HCT116 (cell line): ENCODE measurements at regions of chrX and their contacts with region 1.

Region 1: DNA sequence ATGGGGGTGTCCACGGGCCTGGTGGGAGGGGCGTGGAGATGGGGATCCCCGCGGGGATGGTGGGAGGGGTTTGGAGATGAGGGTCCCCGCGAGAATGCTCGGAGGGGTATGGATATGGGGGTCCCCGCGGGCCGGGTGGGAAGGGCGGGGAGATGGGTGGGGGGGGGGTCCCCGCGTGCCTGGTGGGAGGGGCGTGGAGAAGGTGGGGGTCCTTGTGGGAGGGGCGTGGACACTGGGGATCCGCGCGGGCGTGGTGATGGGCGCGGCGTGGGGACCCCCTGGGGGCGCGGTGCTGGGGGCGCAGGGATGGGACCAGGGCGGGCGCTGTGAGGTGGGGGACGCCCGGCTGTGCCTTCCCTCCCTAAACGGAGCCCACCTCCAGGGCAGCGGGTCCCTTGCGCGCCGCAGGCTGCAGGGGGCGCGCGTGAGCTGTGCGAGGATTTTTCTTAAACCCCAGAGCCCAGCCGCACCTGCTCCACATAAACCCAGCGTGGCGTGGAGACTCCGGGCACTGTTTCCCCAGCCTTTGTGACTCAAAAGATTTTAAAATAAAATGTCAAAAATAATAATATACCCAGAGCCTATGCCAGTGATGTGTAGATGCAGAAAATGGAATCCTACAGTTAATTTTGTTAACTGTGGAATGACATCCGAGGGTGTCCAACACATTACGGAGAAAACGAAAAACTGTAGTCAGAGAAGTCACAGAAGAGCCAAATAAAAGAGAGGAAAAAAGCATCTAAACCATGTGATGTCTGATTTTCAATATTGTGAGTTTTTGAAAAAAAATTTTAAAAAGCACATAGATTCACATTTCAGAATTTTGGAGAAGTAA is 1.5 kb upstream of the ASMTL start:
- DNase-seq: peak; percentile 36
- ATAC-seq: peak; percentile 41
- H3K4me3 ChIP-seq: no peak overlapping the region
- H3K27ac ChIP-seq: no peak overlapping the region
- H3K4me1 ChIP-seq: peaks cover 0 to 8% of the 10 kb centered on the region in 2 experiments; a peak in 1 of 4 replicates
- H3K27me3 ChIP-seq: 0 out of 2 replicates have a peak, but pooled peaks cover 2% of the 10 kb centered on the region
- CTCF ChIP-seq: peak in 2 of 3 experiments; percentile 71 to 86; a peak in 4 of 6 replicates
- POLR2A ChIP-seq: no peak
- RAD21 ChIP-seq: no peak

Region 2: GRCh38 chrX:1411291-1411720 is 42.9 kb before region 1 on chrX:
- CTCF ChIA-PET with region 1: no interaction called
- POLR2A ChIA-PET with region 1: no interaction called
- RAD21 ChIA-PET with region 1: no interaction called
- intact Hi-C with region 1: no loop called
- DNase-seq: no peak
- ATAC-seq: no peak
- H3K4me3 ChIP-seq: no peak overlapping the region
- H3K27ac ChIP-seq: no peak overlapping the region
- H3K4me1 ChIP-seq: no peaks in the 10 kb centered on the region
- H3K27me3 ChIP-seq: no peaks in the 10 kb centered on the region
- CTCF ChIP-seq: no peak
- POLR2A ChIP-seq: no peak
- RAD21 ChIP-seq: no peak

Region 3: GRCh38 chrX:1580735-1581531 is 126.8 kb after region 1 on chrX:
- CTCF ChIA-PET with region 1: no interaction called
- POLR2A ChIA-PET with region 1: no interaction called
- RAD21 ChIA-PET with region 1: no interaction called
- intact Hi-C with region 1: loop called (anchors 5 kb)
- DNase-seq: no peak
- ATAC-seq: peak; percentile 72
- H3K4me3 ChIP-seq: no peak overlapping the region
- H3K27ac ChIP-seq: no peak overlapping the region
- H3K4me1 ChIP-seq: peaks cover 0 to 14% of the 10 kb centered on the region in 2 experiments; a peak in 2 of 4 replicates
- H3K27me3 ChIP-seq: no peaks in the 10 kb centered on the region
- CTCF ChIP-seq: peak; percentile 22 to 78 (median 71); a peak in 5 of 6 replicates
- POLR2A ChIP-seq: no peak
- RAD21 ChIP-seq: peak; percentile 43

Region 4: DNA sequence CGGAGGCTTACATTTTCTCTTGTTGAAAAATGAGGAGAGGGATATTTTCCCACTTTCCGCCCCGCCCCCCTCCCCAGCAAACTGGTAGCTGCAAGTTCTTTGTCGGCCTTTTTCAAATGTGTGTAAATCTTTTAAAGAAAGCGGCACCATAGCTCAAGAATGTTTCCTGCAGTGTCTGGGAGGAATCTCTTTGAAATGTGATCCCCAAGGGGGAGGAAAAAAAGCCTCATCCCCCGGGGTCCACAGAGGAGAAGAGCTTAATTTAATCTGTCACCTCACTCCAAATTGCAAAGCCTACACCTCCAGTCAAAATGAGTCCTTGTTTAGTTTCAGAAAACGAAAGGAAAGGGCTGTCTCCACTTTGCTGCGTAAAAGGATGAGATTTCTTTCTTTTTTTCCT is 195.5 kb after region 1 on chrX:
- CTCF ChIA-PET with region 1: no interaction called
- POLR2A ChIA-PET with region 1: no interaction called
- RAD21 ChIA-PET with region 1: no interaction called
- intact Hi-C with region 1: loop called (anchors 5 kb)
- DNase-seq: no peak
- ATAC-seq: no peak
- H3K4me3 ChIP-seq: no peak overlapping the region
- H3K27ac ChIP-seq: no peak overlapping the region
- H3K4me1 ChIP-seq: peaks cover 0 to 2% of the 10 kb centered on the region in 2 experiments; a peak in 1 of 4 replicates
- H3K27me3 ChIP-seq: no peaks in the 10 kb centered on the region
- CTCF ChIP-seq: no peak
- POLR2A ChIP-seq: no peak
- RAD21 ChIP-seq: no peak

Region 5: DNA sequence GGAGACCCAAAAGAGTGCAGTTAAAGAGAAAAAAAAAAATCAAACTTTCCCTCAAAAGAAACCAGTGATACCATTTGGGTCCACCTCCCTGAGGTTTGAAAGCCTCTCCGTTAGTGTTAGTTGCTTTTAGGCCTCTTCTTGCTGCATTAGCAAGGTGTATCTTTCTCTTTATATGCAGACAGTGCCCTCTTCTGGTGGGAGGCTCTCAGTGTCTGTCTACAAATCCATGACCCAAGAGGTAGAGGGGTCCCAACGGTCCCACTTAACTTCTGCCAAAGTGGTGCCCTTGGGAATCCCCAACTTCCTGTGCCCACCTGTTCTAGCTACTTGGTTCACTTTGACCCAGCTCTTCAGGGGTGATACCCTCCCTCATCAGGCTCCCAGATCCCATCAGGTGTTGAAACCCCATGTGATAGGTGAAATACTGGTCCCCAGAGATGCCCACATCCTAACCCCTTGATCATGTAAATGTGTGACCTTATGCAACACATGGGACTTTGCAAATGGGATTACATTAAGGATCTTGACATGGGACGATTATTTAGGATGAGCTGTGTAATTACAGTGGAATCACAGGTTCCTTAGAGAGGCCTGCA is 1173.2 kb after region 1 on chrX:
- CTCF ChIA-PET with region 1: no interaction called
- POLR2A ChIA-PET with region 1: no interaction called
- RAD21 ChIA-PET with region 1: no interaction called
- intact Hi-C with region 1: loop called (anchors 5 kb)
- DNase-seq: peak; percentile 44
- ATAC-seq: peak; percentile 74
- H3K4me3 ChIP-seq: no peak overlapping the region
- H3K27ac ChIP-seq: no peak overlapping the region
- H3K4me1 ChIP-seq: peaks cover 0 to 7% of the 10 kb centered on the region in 2 experiments; a peak in 1 of 4 replicates
- H3K27me3 ChIP-seq: no peaks in the 10 kb centered on the region
- CTCF ChIP-seq: peak in 2 of 3 experiments; percentile 46 to 69; a peak in 4 of 6 replicates
- POLR2A ChIP-seq: no peak
- RAD21 ChIP-seq: peak; percentile 71